ENCODE measurements at regions of chr3 and their contacts with region 1.

Region 1: DNA sequence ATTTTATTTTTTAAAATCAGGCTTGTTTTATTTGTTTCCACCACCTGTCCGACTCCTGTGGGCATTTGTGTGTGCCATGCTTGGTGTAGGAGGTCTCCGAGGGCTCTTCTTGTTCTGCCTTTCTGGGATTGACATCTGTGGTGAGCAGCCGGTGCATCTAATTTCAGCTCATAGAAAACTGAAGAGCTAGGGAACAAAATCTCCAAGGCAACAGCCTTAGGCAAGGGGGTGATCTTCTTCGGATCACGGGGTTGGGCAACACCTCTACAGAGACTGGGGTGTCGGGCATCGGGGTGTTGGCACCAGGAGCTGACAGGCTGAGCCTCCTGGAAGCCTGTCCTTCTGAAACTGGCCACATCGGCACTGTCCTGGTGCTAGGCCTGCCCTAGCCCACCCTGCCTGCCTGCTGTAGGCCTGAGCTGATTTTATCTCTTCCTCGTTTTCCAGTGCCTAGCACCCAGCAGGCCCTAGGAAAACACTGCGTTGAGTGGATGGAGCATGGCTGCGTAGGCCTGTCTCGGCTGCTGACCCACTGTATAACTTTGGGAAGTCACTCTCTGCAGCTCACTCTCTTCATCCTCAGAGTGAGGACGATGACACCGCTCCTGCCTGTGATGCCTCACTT is 10.3 kb downstream of the CHCHD6 start:
- DNase-seq: no peak
- H3K4me3 ChIP-seq: no peak overlapping the region
- H3K27ac ChIP-seq: no peak overlapping the region
- H3K4me1 ChIP-seq: peaks cover 4% of the 10 kb centered on the region
- H3K27me3 ChIP-seq: no peaks in the 10 kb centered on the region
- CTCF ChIP-seq: no peak

Region 2: GRCh38 chr3:126782554-126782953 is 68.2 kb after region 1 on chr3:
- CTCF ChIA-PET with region 1: no interaction called
- POLR2A ChIA-PET with region 1: no interaction called
- intact Hi-C with region 1: no loop called
- DNase-seq: peak; percentile 55
- H3K4me3 ChIP-seq: no peak overlapping the region
- H3K27ac ChIP-seq: peak overlapping the region; percentile 81
- H3K4me1 ChIP-seq: peaks cover 25% of the 10 kb centered on the region
- H3K27me3 ChIP-seq: no peaks in the 10 kb centered on the region
- CTCF ChIP-seq: no peak

Region 3: GRCh38 chr3:127287840-127288239 is 573.5 kb after region 1 on chr3 and contains the start of gene PRR20G:
- CTCF ChIA-PET with region 1: interaction called, 11 read pairs
- POLR2A ChIA-PET with region 1: no interaction called
- intact Hi-C with region 1: no loop called
- DNase-seq: peak; percentile 5
- H3K4me3 ChIP-seq: no peak within 1 kb of the TSS
- H3K27ac ChIP-seq: no peak within 1 kb of the TSS
- H3K4me1 ChIP-seq: no peaks in the 10 kb centered on the region
- H3K27me3 ChIP-seq: peaks cover 4% of the 10 kb centered on the region
- CTCF ChIP-seq: no peak
- total RNA-seq, gene PRR20G: not detected in 2 replicates